Pancreas (tissue), 10 donors: ENCODE measurements at regions of chr4 and their contacts with region 1.

Region 1: GRCh38 chr4:88225232-88226105 is 58.9 kb downstream of the PPM1K start:
- DNase-seq: no peak
- ATAC-seq: no peak
- H3K4me3 ChIP-seq: no peak overlapping the region
- H3K27ac ChIP-seq: no peak overlapping the region
- H3K4me1 ChIP-seq: no peaks in the 10 kb centered on the region
- H3K27me3 ChIP-seq: no peaks in the 10 kb centered on the region
- CTCF ChIP-seq: no peak

Region 2: DNA sequence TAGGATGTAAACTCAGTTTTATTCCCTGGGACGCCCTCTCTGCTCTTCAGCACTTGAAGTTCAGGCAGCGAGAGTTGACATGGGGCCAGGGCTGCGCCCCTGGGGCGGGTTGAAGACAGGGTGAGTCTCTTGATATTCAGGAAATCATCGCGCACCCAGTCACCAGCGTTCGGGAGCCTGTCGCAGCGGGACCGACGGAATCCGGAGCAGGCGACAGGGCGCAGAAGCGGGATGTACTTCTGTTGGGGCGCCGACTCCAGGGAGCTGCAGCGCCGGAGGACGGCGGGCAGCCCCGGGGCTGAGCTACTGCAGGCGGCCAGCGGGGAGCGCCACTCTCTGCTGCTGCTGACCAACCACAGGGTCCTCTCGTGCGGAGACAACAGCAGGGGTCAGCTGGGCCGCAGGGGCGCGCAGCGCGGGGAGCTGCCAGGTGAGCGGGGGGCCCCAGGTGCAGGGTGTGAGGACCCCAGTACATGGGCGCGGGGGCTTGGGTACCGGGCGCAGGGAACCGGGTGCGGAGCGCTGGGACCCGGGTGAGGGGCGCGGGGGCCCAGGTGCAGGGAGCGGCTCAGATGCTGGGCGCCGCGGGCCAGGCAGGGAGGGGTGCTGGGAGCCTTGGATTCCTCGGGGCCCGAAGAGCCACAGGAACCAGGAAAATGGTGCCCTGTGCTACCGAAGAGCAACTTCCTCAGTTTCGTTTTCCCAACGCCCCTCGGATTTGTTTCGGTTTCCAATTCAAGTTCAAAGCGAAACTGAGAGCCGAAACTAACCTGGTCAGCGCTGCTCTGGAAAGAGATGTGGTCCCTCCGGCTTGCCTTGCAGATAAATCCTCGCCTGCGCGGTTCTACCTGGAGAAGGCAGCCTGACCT is 153.5 kb after region 1 on chr4 and contains the start of gene HERC6:
- intact Hi-C with region 1: loop called in 1 of 3 experiments (anchors 10 kb)
- DNase-seq: peak; percentile 73 to 89 (median 80)
- ATAC-seq: peak; percentile 93 to 97 (median 95)
- H3K4me3 ChIP-seq: peak within 1 kb of the TSS; percentile 55 to 97 (median 93)
- H3K27ac ChIP-seq: peak within 1 kb of the TSS; percentile 80 to 98 (median 92)
- H3K4me1 ChIP-seq: peaks cover 0 to 7% (median 0%) of the 10 kb centered on the region in 3 donors
- H3K27me3 ChIP-seq: no peaks in the 10 kb centered on the region
- CTCF ChIP-seq: peak; percentile 32 to 67 (median 55)
- total RNA-seq, gene HERC6: 2.7 to 8.3 (median 4.6) TPM